ENCODE measurements at regions of chr1 and their contacts with region 1.

Region 1: DNA sequence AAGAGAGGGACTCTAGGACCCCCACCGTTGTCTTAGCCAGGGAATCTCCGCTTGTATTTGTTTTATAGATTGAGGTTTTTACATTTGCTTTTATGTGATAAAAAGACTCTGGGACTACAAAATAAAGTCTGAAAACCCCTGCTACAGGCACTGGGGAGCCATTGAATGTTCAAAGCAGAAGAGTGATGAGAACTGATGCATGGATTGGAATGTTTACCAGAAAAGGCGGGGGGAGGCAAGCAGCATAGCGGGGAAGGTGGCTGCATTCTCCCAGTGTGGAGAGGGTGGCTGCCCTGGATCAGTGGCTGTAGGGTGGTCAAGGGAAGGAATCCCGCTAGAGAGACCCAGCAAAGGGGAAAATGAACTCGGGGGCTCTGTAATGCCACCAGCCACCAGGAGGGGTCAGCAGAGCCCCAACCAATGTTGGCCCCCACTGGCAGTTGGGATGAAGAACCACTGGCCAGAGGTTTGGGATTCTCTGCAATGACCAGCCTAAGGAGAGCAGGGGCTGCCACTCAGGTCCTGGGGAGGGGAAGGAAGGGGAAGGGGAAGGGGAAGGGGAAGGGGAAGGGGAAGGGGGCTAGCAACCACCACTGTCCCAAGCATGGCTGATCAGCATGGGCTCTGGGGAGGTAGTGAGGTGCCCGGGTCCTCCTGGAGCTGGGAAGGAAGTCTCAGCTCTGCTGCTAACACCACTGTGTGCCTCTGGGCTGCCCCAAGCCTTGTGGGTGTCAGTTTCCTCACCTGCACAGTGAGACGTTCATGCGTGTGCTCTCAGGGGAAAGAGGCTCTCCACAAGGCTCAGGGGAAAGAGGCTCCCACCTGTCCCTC is 19.2 kb upstream of the PEF1 start:
- DNase-seq: peak; percentile 28
- ATAC-seq: peak; percentile 54
- H3K4me3 ChIP-seq: no peak overlapping the region
- H3K27ac ChIP-seq: no peak overlapping the region
- H3K4me1 ChIP-seq: peaks cover 10% of the 10 kb centered on the region
- H3K27me3 ChIP-seq: no peaks in the 10 kb centered on the region
- CTCF ChIP-seq: peak; percentile 93
- EP300 ChIP-seq: no peak
- POLR2A ChIP-seq: no peak
- RAD21 ChIP-seq: peak; percentile 95

Region 2: GRCh38 chr1:31745096-31745945 is 81.5 kb after region 1 on chr1:
- CTCF ChIA-PET with region 1: interaction called, 15 read pairs
- POLR2A ChIA-PET with region 1: no interaction called
- in situ Hi-C with region 1: no loop called
- intact Hi-C with region 1: loop called (anchors 1 kb)
- DNase-seq: peak; percentile 27
- ATAC-seq: peak; percentile 91
- H3K4me3 ChIP-seq: no peak overlapping the region
- H3K27ac ChIP-seq: no peak overlapping the region
- H3K4me1 ChIP-seq: no peaks in the 10 kb centered on the region
- H3K27me3 ChIP-seq: peaks cover 1 to 34% of the 10 kb centered on the region in 2 experiments; a peak in 3 of 5 replicates
- CTCF ChIP-seq: peak; percentile 87
- EP300 ChIP-seq: no peak
- POLR2A ChIP-seq: no peak
- RAD21 ChIP-seq: peak; percentile 78

Measured in HepG2 (cell line).